OCI-LY7 (cell line): ENCODE measurements at regions of chr16 and their contacts with region 1.

Region 1: GRCh38 chr16:81831722-81832126 is 52.6 kb downstream of the PLCG2 start:
- DNase-seq: peak; percentile 95
- H3K4me3 ChIP-seq: peak overlapping the region; percentile 70
- H3K27ac ChIP-seq: peak overlapping the region; percentile 97
- H3K4me1 ChIP-seq: peaks cover 97% of the 10 kb centered on the region
- CTCF ChIP-seq: peak; percentile 54

Region 2: GRCh38 chr16:81680444-81681275 is 151.1 kb before region 1 on chr16:
- CTCF ChIA-PET with region 1: no interaction called
- POLR2A ChIA-PET with region 1: no interaction called
- intact Hi-C with region 1: no loop called
- DNase-seq: no peak
- H3K4me3 ChIP-seq: no peak overlapping the region
- H3K27ac ChIP-seq: no peak overlapping the region
- H3K4me1 ChIP-seq: no peaks in the 10 kb centered on the region
- CTCF ChIP-seq: no peak

Region 3: DNA sequence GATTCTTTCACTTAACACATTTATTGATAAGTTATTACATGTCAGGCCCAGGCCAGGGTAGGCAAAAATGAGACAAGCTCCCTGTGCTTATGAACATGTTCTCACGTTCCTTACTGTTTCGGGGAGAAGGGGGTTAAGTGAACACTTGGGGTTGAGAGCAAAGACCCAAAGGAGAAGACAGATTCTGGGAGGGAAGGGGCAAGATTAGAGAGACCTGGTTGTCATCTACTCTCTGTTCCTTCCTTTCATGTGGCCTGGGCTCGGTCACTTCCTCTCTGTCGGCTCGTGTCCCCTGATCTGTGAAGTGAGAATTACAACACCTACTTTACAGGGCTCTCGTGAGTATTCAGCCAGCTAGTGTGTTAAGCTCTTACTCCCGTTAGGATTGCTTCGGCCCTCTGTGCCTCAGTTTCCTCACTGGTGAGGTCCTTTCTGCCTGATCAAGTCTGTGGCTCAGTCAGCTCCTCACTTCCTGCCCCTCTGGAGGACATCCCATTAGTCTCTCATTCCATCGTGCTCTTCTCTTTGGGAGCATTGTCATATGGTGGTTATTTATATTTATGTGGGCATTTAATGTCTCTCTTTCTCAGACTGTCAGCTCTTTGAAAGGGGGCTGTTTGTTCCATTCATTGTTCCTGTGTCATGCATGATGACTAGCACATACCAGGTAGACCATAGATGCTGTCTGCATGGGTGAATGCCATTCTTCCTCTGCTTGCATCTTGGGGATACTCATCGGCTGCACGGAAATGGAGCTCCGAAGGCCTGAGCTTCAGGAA is 13.7 kb before region 1 on chr16:
- CTCF ChIA-PET with region 1: interaction called, 3 read pairs
- POLR2A ChIA-PET with region 1: interaction called, 48 read pairs
- intact Hi-C with region 1: loop called (anchors 2 kb)
- DNase-seq: peak; percentile 88
- H3K4me3 ChIP-seq: peak overlapping the region; percentile 64
- H3K27ac ChIP-seq: peak overlapping the region; percentile 97
- H3K4me1 ChIP-seq: peaks cover 95% of the 10 kb centered on the region
- CTCF ChIP-seq: no peak

Region 4: GRCh38 chr16:81863630-81864352 is 32.1 kb after region 1 on chr16:
- CTCF ChIA-PET with region 1: no interaction called
- POLR2A ChIA-PET with region 1: interaction called, 10 read pairs
- intact Hi-C with region 1: loop called (anchors 2 kb)
- DNase-seq: peak; percentile 91
- H3K4me3 ChIP-seq: peak overlapping the region; percentile 59
- H3K27ac ChIP-seq: peak overlapping the region; percentile 89
- H3K4me1 ChIP-seq: peaks cover 69% of the 10 kb centered on the region
- CTCF ChIP-seq: 0 out of 2 replicates have a peak, but pooled peaks have one; percentile 19

Region 5: GRCh38 chr16:81873843-81874752 is 42.4 kb after region 1 on chr16:
- CTCF ChIA-PET with region 1: no interaction called
- POLR2A ChIA-PET with region 1: interaction called, 6 read pairs
- intact Hi-C with region 1: loop called (anchors 2 kb)
- DNase-seq: peak; percentile 81
- H3K4me3 ChIP-seq: no peak overlapping the region
- H3K27ac ChIP-seq: peak overlapping the region; percentile 47
- H3K4me1 ChIP-seq: peaks cover 44% of the 10 kb centered on the region
- CTCF ChIP-seq: peak; percentile 98